Psoas muscle (tissue), 8 donors: ENCODE measurements at regions of chr16 and their contacts with region 1.

Region 1: DNA sequence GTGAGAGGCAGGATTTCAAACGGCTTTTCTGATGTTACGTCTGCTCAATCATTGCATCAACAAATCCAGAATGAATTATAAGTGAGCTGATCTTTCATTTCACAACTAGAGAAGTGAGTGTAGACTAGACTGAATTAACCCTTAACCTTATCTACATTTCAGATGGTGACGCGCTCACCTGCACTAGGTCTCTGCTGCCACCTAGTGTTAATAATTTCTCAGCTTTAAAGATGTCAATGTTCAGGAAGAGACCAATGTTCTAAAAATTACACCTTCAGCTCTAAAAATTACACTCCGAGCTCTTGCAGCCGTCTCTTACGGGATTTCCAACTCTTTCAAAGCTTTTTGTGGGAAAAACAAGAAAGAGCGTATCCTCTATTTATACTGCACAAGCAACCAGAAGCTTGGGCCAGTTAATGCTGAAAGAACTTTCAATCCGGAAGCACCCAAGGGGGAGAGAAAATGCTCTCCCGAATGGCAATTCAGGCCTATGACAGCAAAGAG is 88.2 kb upstream of the FA2H start:
- DNase-seq: no peak
- ATAC-seq: peak in 2 of 4 donors; percentile 42 to 60
- H3K4me3 ChIP-seq: no peak overlapping the region
- H3K27ac ChIP-seq: no peak overlapping the region
- H3K4me1 ChIP-seq: no peaks in the 10 kb centered on the region
- H3K27me3 ChIP-seq: peaks cover 0 to 3% (median 0%) of the 10 kb centered on the region in 3 donors
- CTCF ChIP-seq: peak; percentile 82

Region 2: GRCh38 chr16:74666425-74667254 is 196.2 kb before region 1 on chr16 and contains the start of gene RFWD3:
- intact Hi-C with region 1: no loop called
- DNase-seq: peak; percentile 95 to 98
- ATAC-seq: peak; percentile 100
- H3K4me3 ChIP-seq: peak within 1 kb of the TSS; percentile 78
- H3K27ac ChIP-seq: peak within 1 kb of the TSS; percentile 85
- H3K4me1 ChIP-seq: peaks cover 3% of the 10 kb centered on the region
- H3K27me3 ChIP-seq: no peaks in the 10 kb centered on the region
- CTCF ChIP-seq: no peak
- total RNA-seq, gene RFWD3: 4.0 to 8.2 (median 7.2) TPM

Region 3: GRCh38 chr16:74709441-74709877 is 153.3 kb before region 1 on chr16:
- intact Hi-C with region 1: loop called (anchors 2 kb)
- DNase-seq: peak; percentile 81 to 88
- ATAC-seq: peak; percentile 86 to 97 (median 91)
- H3K4me3 ChIP-seq: no peak overlapping the region
- H3K27ac ChIP-seq: no peak overlapping the region
- H3K4me1 ChIP-seq: no peaks in the 10 kb centered on the region
- H3K27me3 ChIP-seq: no peaks in the 10 kb centered on the region
- CTCF ChIP-seq: peak; percentile 97

Region 4: GRCh38 chr16:74813109-74813641 is 49.6 kb before region 1 on chr16:
- intact Hi-C with region 1: loop called (anchors 2 to 5 kb)
- DNase-seq: peak; percentile 59 to 74
- ATAC-seq: peak; percentile 91 to 98 (median 97)
- H3K4me3 ChIP-seq: no peak overlapping the region
- H3K27ac ChIP-seq: no peak overlapping the region
- H3K4me1 ChIP-seq: no peaks in the 10 kb centered on the region
- H3K27me3 ChIP-seq: no peaks in the 10 kb centered on the region
- CTCF ChIP-seq: peak; percentile 83